ENCODE measurements at regions of chr10 and their contacts with region 1.

Region 1: DNA sequence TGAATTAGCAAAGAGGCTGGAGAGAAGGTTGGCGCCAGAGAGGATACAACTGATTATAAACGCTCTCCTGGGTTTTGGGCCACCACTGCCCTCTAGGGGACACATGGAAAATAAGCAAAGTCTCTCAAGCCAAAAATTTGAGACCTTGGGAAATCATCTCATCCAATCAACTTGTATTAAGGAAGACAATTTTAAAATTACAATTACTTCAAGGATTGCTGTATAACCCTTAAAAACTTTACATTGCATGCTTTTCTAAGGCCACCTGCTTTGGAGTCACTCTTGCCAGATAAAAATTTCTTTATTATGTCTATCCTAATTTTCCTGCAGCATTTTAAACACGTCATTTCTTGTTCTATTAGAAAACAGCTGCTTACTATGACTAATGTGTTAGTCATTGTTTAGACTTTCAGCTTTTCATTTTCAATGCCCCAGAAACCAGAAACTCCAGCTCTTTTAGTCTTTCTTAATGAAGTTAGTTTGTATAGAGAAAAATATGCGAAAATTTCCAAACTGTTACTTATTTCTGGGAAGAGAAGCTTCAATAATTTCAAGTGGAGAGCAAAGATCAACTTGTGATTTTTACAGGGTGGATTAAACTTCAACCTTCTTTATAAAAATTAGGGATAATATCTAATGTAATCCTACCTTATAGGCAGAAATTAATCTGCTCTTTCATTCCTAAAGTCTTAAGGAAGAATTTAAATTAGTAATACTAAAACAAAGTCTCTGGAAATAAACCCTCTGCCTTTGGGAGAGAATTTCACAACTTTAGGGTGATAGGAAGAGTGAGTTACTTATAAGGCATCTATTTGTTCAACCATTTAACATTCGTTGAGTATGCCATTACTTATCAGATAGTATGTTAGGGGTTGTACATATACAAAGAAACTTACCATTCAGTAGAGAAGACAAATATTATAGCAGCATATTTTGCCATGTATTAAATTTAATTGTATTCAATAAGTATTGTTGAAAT is 20.6 kb upstream of the RHOBTB1 start:
- DNase-seq: no peak
- ATAC-seq: peak; percentile 89

Region 2: DNA sequence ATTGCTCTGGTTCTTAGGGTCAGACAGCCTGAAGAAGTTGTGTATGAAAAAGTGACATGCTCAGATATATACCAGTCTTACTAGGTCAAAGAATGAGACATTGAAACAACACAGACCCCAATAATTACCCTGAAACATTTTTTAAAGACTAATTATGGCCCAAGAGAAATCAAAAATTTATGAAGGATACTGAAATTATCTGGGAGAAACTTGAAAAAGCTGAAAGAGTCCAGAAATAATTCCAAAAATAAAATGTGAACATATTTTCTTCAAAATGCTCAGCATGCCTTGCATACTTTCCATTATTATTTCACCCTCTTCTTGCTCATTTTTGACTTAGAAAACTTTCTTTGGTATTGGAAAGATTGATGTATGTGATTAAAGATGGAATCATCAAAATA is 859.3 kb before region 1 on chr10:
- intact Hi-C with region 1: no loop called
- DNase-seq: no peak
- ATAC-seq: no peak

Region 3: GRCh38 chr10:60497364-60497763 is 467.2 kb before region 1 on chr10:
- intact Hi-C with region 1: no loop called
- DNase-seq: no peak
- ATAC-seq: no peak

Region 4: GRCh38 chr10:60816628-60817397 is 147.7 kb before region 1 on chr10:
- intact Hi-C with region 1: loop called (anchors 2 kb)
- DNase-seq: no peak
- ATAC-seq: peak; percentile 94

Region 5: GRCh38 chr10:60883187-60883586 is 81.4 kb before region 1 on chr10:
- intact Hi-C with region 1: loop called (anchors 1 kb)
- DNase-seq: no peak
- ATAC-seq: peak; percentile 82

Region 6: GRCh38 chr10:61000769-61001730 is 36.5 kb after region 1 on chr10:
- intact Hi-C with region 1: no loop called
- DNase-seq: no peak
- ATAC-seq: peak; percentile 20

Region 7: GRCh38 chr10:61110188-61110920 is 145.8 kb after region 1 on chr10:
- intact Hi-C with region 1: no loop called
- DNase-seq: no peak
- ATAC-seq: no peak

Region 8: DNA sequence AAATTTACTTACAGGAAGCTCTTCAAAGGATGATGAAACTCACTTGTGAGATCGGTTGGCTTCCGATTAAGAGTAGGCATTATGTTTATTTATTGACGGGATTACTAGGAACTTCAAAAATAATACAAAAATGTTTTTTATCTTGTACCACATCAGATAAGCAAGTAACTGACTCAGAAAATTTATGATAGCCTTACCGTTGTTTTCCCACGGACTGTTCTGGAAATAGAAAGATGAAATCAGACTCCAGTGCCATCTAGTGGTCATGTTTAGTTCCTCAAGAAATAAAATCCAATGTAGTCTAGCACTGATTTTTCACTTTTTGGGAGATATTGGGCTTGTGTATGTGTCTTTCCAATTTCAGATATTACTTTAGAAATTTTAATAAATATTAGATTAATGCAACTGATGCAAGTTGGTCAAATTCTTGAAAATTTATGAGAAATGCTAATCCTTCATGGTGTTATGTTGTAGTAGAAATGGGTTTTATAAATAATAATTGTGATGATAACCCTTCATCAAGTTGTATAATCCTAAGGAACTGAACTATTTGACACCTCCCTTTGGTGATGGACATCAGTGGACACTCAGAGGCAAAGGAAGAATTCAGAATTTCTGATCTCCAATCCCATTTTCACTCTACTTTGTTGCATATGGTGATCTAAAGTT is 319.8 kb after region 1 on chr10:
- intact Hi-C with region 1: loop called (anchors 10 kb)
- DNase-seq: no peak
- ATAC-seq: no peak

Measured in Right ventricle myocardium inferior (tissue), 1 donor.